ENCODE measurements at regions of chr12 and their contacts with region 1.

Region 1: GRCh38 chr12:64256166-64256800 is 34.2 kb upstream of the KICS2 start:
- DNase-seq: no peak
- ATAC-seq: peak; percentile 52
- H3K4me3 Mint-ChIP-seq: peak overlapping the region; percentile 30
- H3K27ac Mint-ChIP-seq: peak overlapping the region; percentile 26; the same call in 1 of the 2 replicates
- H3K4me1 Mint-ChIP-seq: peaks cover 7% of the 10 kb centered on the region
- H3K27me3 Mint-ChIP-seq: no peaks in the 10 kb centered on the region
- CTCF ChIP-seq: peak; percentile 57

Region 2: DNA sequence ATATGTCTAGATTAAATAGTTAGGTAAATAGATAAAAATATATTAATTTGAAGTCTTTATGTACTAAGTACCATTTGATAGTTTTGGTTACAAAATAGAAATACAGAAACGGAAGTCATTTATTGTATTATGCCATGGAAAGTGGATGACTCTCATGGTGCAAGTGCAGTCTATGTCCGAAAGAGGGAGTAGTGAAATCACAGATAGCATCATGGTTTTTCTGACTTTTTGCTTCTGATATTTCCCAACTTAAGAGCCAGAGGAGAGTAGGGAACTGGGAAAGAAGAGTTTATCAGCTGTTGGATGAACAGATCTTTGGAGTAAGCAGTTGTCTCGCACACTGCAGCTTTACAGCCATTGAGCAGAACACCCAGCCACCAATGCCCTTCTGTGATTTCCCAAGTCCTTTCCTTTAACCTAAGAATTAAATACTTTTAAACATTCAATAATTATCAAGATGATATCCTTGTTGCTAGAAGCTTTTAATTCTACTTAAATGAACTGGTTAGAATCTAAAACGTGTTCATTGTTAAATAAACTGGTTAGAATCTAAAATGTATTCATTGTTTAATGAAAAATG is 430.2 kb before region 1 on chr12:
- CTCF ChIA-PET with region 1: interaction called, 15 read pairs
- POLR2A ChIA-PET with region 1: no interaction called
- DNase-seq: no peak
- ATAC-seq: peak; percentile 77
- H3K4me3 Mint-ChIP-seq: no peak overlapping the region
- H3K27ac Mint-ChIP-seq: no peak overlapping the region
- H3K4me1 Mint-ChIP-seq: peaks cover 5% of the 10 kb centered on the region
- H3K27me3 Mint-ChIP-seq: peaks cover 15% of the 10 kb centered on the region
- CTCF ChIP-seq: peak; percentile 57; the same call in 1 of the 2 replicates

Region 3: DNA sequence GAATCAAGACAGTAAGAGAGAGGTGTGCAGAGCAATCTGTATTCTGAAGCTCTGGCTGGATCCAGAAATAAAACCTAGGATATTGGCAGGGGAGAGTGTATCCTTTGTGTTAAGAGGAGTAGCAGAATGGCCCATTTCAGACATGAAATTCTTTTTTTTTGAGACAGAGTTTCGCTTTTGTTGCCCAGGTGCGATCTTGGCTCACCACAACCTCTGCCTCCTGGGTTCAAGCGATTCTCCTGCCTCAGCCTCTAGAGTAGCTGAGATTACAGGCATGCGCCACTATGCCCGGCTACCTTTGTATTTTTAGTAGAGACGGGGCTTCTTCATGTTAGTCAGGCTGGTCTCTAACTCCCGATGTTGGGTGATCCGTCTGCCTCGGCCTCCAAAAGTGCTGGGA is 417.9 kb before region 1 on chr12:
- CTCF ChIA-PET with region 1: interaction called, 26 read pairs
- POLR2A ChIA-PET with region 1: no interaction called
- DNase-seq: no peak
- ATAC-seq: no peak
- H3K4me3 Mint-ChIP-seq: no peak overlapping the region
- H3K27ac Mint-ChIP-seq: no peak overlapping the region
- H3K4me1 Mint-ChIP-seq: peaks cover 4% of the 10 kb centered on the region
- H3K27me3 Mint-ChIP-seq: no peaks in the 10 kb centered on the region; the same call in 1 of the 2 replicates
- CTCF ChIP-seq: no peak

Region 4: GRCh38 chr12:63843721-63844390 is 412.4 kb before region 1 on chr12:
- CTCF ChIA-PET with region 1: interaction called, 26 read pairs
- POLR2A ChIA-PET with region 1: no interaction called
- DNase-seq: peak; percentile 87
- ATAC-seq: peak; percentile 87
- H3K4me3 Mint-ChIP-seq: peak overlapping the region; percentile 68
- H3K27ac Mint-ChIP-seq: no peak overlapping the region
- H3K4me1 Mint-ChIP-seq: peaks cover 22% of the 10 kb centered on the region
- H3K27me3 Mint-ChIP-seq: peaks cover 4% of the 10 kb centered on the region
- CTCF ChIP-seq: peak; percentile 73